GM12878 (cell line): ENCODE measurements at regions of chr10 and their contacts with region 1.

Region 1: DNA sequence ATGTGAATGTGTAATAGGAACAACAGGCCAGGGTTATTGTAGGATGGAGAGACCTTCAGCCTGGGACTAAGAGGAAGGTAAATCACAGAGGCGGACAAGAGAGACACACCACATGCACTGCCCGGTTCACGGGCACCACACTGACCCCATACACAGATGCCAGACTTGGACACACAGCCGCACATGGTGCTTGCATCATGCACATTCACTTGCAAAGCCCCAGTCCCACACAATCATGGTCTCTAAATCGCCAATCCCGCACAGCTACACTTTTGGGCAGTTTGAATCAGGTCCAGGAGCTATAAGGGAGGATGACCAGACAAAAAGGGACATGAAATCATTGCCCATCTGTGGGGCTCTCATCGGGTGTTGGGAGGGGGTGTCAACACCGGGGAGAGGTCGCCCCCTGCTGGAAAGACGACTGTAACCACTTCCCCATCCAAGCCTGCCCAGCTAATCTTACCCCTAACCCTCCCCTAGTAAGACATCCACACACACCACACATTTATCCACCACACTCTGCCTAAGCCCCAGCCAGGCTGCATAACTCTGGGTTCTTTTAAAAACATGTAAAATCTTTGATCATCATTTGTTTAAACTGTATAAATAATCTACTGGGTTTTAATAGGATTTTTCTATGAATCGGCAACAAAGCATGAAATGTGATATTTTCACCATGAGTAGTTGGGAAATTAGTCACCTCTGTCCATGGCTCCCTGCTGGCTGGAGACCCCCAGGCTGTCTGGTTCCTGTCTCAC is 40.5 kb upstream of the SLF2 start:
- DNase-seq: no peak
- ATAC-seq: peak; percentile 96
- H3K4me3 ChIP-seq: no peak overlapping the region
- H3K27ac ChIP-seq: no peak overlapping the region
- H3K4me1 ChIP-seq: no peaks in the 10 kb centered on the region
- H3K27me3 ChIP-seq: peaks cover 0 to 2% of the 10 kb centered on the region in 2 experiments; a peak in 1 of 4 replicates
- CTCF ChIP-seq: peak; percentile 64 to 66 (median 65)
- EP300 ChIP-seq: no peak
- POLR2A ChIP-seq: no peak
- RAD21 ChIP-seq: peak; percentile 48

Region 2: GRCh38 chr10:100659361-100660098 is 212.7 kb before region 1 on chr10:
- CTCF ChIA-PET with region 1: no interaction called
- POLR2A ChIA-PET with region 1: no interaction called
- RAD21 ChIA-PET with region 1: no interaction called
- SMC1A ChIA-PET with region 1: no interaction called
- in situ Hi-C with region 1: no loop called
- intact Hi-C with region 1: no loop called
- DNase-seq: no peak
- ATAC-seq: no peak
- H3K4me3 ChIP-seq: no peak overlapping the region
- H3K27ac ChIP-seq: no peak overlapping the region
- H3K4me1 ChIP-seq: no peaks in the 10 kb centered on the region
- H3K27me3 ChIP-seq: peaks cover 17 to 26% of the 10 kb centered on the region in 2 experiments
- CTCF ChIP-seq: no peak
- EP300 ChIP-seq: no peak
- POLR2A ChIP-seq: no peak
- RAD21 ChIP-seq: no peak

Region 3: GRCh38 chr10:100710151-100710871 is 161.9 kb before region 1 on chr10:
- CTCF ChIA-PET with region 1: no interaction called
- POLR2A ChIA-PET with region 1: no interaction called
- RAD21 ChIA-PET with region 1: no interaction called
- SMC1A ChIA-PET with region 1: no interaction called
- in situ Hi-C with region 1: no loop called
- intact Hi-C with region 1: no loop called
- DNase-seq: no peak
- ATAC-seq: no peak
- H3K4me3 ChIP-seq: no peak overlapping the region
- H3K27ac ChIP-seq: no peak overlapping the region
- H3K4me1 ChIP-seq: no peaks in the 10 kb centered on the region
- H3K27me3 ChIP-seq: peaks cover 17 to 25% of the 10 kb centered on the region in 2 experiments
- CTCF ChIP-seq: no peak
- EP300 ChIP-seq: no peak
- POLR2A ChIP-seq: no peak
- RAD21 ChIP-seq: no peak

Region 4: GRCh38 chr10:100803492-100803891 is 68.7 kb before region 1 on chr10:
- CTCF ChIA-PET with region 1: no interaction called
- POLR2A ChIA-PET with region 1: no interaction called
- RAD21 ChIA-PET with region 1: no interaction called
- SMC1A ChIA-PET with region 1: no interaction called
- in situ Hi-C with region 1: no loop called
- intact Hi-C with region 1: no loop called
- DNase-seq: no peak
- ATAC-seq: no peak
- H3K4me3 ChIP-seq: no peak overlapping the region
- H3K27ac ChIP-seq: no peak overlapping the region
- H3K4me1 ChIP-seq: no peaks in the 10 kb centered on the region
- H3K27me3 ChIP-seq: peaks cover 5 to 15% of the 10 kb centered on the region in 2 experiments
- CTCF ChIP-seq: no peak
- EP300 ChIP-seq: no peak
- POLR2A ChIP-seq: no peak
- RAD21 ChIP-seq: no peak

Region 5: DNA sequence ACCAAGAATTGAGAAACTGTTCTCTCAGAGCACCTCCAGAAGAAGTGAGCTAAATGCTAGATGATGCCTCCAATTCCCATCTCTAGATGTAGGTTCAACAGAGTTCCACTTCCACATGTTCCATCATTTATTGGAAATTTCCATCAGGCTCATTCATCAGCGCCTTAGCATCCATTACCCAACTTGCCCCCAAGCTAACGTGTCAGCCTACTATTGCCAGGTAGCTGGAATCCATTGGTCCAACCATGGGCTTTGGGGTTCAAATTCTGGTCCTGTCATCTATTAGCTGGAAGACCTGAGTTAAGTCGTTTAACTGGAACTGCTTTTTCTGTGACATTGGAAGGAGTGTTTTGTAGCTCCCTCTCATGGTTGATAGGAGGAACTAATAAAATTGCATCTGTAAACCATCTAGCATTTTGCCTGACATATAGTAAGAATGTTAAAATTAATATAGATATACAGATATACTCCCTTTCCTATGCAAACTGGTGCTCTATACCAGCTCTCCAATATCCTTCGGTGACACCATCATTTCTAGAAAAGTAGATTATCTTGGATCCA is 16.7 kb after region 1 on chr10:
- CTCF ChIA-PET with region 1: interaction called, 11 read pairs
- POLR2A ChIA-PET with region 1: no interaction called
- RAD21 ChIA-PET with region 1: no interaction called
- SMC1A ChIA-PET with region 1: interaction called, 21 read pairs
- in situ Hi-C with region 1: no loop called
- intact Hi-C with region 1: no loop called
- DNase-seq: no peak
- ATAC-seq: no peak; the same call in 2 of the 3 replicates
- H3K4me3 ChIP-seq: no peak overlapping the region
- H3K27ac ChIP-seq: no peak overlapping the region
- H3K4me1 ChIP-seq: no peaks in the 10 kb centered on the region
- H3K27me3 ChIP-seq: no peaks in the 10 kb centered on the region; a peak in 1 of 4 replicates
- CTCF ChIP-seq: peak in 2 of 3 experiments; percentile 21 to 34; a peak in 3 of 6 replicates
- EP300 ChIP-seq: no peak
- POLR2A ChIP-seq: no peak
- RAD21 ChIP-seq: peak; percentile 32; the same call in 1 of the 2 replicates